ENCODE measurements at regions of chr22 and their contacts with region 1.

Region 1: GRCh38 chr22:26461188-26461810 is 22.3 kb downstream of the HPS4 start:
- DNase-seq: peak; percentile 50
- ATAC-seq: peak; percentile 84
- H3K4me3 ChIP-seq: no peak overlapping the region
- H3K27ac ChIP-seq: no peak overlapping the region
- H3K4me1 ChIP-seq: no peaks in the 10 kb centered on the region
- H3K27me3 ChIP-seq: no peaks in the 10 kb centered on the region
- CTCF ChIP-seq: peak; percentile 73

Region 2: GRCh38 chr22:26398741-26399153 is 62.6 kb before region 1 on chr22:
- CTCF ChIA-PET with region 1: no interaction called
- POLR2A ChIA-PET with region 1: no interaction called
- intact Hi-C with region 1: loop called (anchors 1 kb)
- DNase-seq: peak; percentile 68
- ATAC-seq: peak; percentile 84
- H3K4me3 ChIP-seq: no peak overlapping the region
- H3K27ac ChIP-seq: no peak overlapping the region
- H3K4me1 ChIP-seq: no peaks in the 10 kb centered on the region
- H3K27me3 ChIP-seq: peaks cover 14% of the 10 kb centered on the region
- CTCF ChIP-seq: peak; percentile 77

Region 3: GRCh38 chr22:26648011-26648497 is 186.8 kb after region 1 on chr22:
- CTCF ChIA-PET with region 1: no interaction called
- POLR2A ChIA-PET with region 1: no interaction called
- intact Hi-C with region 1: no loop called
- DNase-seq: no peak
- ATAC-seq: no peak
- H3K4me3 ChIP-seq: no peak overlapping the region
- H3K27ac ChIP-seq: no peak overlapping the region
- H3K4me1 ChIP-seq: 0 out of 2 replicates have a peak, but pooled peaks cover 6% of the 10 kb centered on the region
- H3K27me3 ChIP-seq: peaks cover 57% of the 10 kb centered on the region
- CTCF ChIP-seq: no peak

Measured in PC-3 (cell line).